Left cardiac atrium (tissue), 4 donors: ENCODE measurements at regions of chr13 and their contacts with region 1.

Region 1: DNA sequence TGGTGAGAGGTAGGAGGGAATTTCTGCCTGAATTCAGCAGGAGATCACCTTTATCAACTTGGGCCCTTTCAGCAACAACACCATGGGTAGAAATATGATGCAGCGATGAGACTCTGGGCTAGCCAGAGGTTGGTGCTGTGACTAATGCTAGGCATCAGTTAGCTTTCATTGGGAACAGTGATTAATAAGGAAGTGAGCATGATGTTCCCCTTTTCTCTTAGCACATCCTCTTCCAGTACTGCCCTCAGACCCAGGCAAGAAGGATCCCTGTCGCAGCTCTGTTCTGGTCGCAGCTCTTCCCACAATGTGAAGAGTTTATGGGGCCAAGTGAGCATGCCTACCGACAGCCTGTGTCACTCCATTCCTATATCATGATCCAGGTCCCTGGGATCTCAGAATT is 100.5 kb downstream of the FLT1 start:
- DNase-seq: no peak
- ATAC-seq: peak in 1 of 2 donors; percentile 71

Region 2: GRCh38 chr13:28329395-28330158 is 64.8 kb before region 1 on chr13:
- intact Hi-C with region 1: loop called in 1 of 2 experiments (anchors 5 kb)
- DNase-seq: peak; percentile 48
- ATAC-seq: peak; percentile 82 to 90